ENCODE measurements at regions of chr13 and their contacts with region 1.

Region 1: DNA sequence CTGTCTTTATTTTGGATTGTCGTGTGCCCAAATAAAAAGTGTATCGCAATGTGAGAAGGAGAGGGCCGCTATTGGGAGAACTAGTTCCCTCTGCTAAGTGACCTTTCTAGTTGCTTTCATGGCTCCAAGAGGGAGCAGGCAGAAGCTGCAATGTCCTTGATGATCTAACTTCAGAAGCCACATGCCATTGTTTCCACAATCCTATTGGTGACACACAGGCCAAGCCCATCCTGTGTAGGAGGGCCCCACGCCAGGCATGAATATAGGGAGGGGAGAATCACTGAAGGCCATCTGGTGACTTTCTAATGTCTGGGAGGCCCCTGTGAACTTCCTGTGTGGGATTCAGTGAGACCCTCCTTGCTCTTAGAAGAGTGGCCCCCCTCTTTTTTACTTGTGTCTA is 47.8 kb upstream of the KPNA3 start:
- DNase-seq: no peak
- H3K4me3 ChIP-seq: no peak overlapping the region
- H3K27ac ChIP-seq: no peak overlapping the region
- H3K4me1 ChIP-seq: no peaks in the 10 kb centered on the region
- H3K27me3 ChIP-seq: no peaks in the 10 kb centered on the region
- CTCF ChIP-seq: no peak
- POLR2A ChIP-seq: no peak

Region 2: GRCh38 chr13:49652355-49653305 is 187.6 kb before region 1 on chr13:
- intact Hi-C with region 1: loop called (anchors 5 kb)
- DNase-seq: peak; percentile 26
- H3K4me3 ChIP-seq: no peak overlapping the region
- H3K27ac ChIP-seq: no peak overlapping the region
- H3K4me1 ChIP-seq: no peaks in the 10 kb centered on the region
- H3K27me3 ChIP-seq: no peaks in the 10 kb centered on the region
- CTCF ChIP-seq: peak in 3 of 4 experiments; percentile 30 to 51 (median 34)
- POLR2A ChIP-seq: no peak

Region 3: GRCh38 chr13:49669735-49670309 is 170.4 kb before region 1 on chr13:
- intact Hi-C with region 1: loop called (anchors 5 kb)
- DNase-seq: peak; percentile 65
- H3K4me3 ChIP-seq: no peak overlapping the region
- H3K27ac ChIP-seq: no peak overlapping the region
- H3K4me1 ChIP-seq: no peaks in the 10 kb centered on the region
- H3K27me3 ChIP-seq: no peaks in the 10 kb centered on the region
- CTCF ChIP-seq: peak; percentile 15 to 68 (median 50)
- POLR2A ChIP-seq: no peak

Measured in prostate gland (tissue), 2 donors.